ENCODE measurements at regions of chr10 and their contacts with region 1.

Region 1: DNA sequence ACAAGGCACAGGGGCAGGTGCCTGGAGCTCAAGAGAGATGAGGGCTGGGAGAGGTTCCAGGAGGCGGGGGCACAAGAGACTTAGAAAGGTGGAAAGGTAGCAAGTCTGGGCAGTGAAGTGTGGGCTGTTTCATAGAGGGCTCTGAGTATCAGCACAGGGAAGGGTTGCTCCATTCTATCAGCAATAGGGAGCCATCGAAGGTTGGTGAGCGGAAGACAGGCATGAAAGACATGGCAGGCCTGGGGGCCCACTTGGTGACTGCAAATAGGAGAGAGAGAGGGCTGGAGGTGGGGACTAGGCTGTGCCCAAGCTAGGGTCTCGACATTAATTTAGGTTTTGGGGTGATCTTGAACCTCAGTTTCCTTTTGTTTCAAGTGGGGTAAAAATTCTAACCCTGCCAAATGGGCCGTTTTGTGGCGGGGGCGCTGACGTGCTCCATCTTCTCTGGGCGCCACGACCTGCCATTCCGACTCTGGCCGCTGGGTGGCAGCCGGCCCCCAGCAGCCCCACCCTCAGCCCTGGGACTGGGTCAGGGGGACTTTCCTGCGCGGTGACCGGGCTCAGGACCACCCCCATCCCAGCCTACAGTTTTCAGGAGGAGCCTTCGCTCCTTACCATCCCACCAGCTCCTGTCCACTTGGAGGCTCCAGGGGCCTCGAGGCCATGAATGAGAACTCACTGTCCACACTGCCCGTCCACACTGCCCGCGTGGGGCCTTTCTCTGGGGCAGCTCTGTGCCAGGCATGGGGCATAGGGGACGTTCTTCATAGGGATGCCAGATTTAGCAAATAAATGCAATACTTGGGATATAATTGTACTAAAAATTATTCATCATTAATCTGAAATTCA is 37.2 kb upstream of the PCBD1 start:
- DNase-seq: peak; percentile 54
- ATAC-seq: peak; percentile 80 to 83

Region 2: GRCh38 chr10:70803775-70804420 is 121.7 kb before region 1 on chr10:
- intact Hi-C with region 1: no loop called
- DNase-seq: no peak
- ATAC-seq: no peak

Region 3: GRCh38 chr10:71068861-71069271 is 143.3 kb after region 1 on chr10:
- intact Hi-C with region 1: loop called in 1 of 2 experiments (anchors 10 kb)
- DNase-seq: peak; percentile 66
- ATAC-seq: peak; percentile 74 to 88

Region 4: GRCh38 chr10:71302874-71303568 is 377.4 kb after region 1 on chr10:
- intact Hi-C with region 1: no loop called
- DNase-seq: no peak
- ATAC-seq: peak in 1 of 2 donors; percentile 33

Measured in left cardiac atrium (tissue), 4 donors.